Breast epithelium (tissue), 4 donors: ENCODE measurements at regions of chr4 and their contacts with region 1.

Region 1: DNA sequence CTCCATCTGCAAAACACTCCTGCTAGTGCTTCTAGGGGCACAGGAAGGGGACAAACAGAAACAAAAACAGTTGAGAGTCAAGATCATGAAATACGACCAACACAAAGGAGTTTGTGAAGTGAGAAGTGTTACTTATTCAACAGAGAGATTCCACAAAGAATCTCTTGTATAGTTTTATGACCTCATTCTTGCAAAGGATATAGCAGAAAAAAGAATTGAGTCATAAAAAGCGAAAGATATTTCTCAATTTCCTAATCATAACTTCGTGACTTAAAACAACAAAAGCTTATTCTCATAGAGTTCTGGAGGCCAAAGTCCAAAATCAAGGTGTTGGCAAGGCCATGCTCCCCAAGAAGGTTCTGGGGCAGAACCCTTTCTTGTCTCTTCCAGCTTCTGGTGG is 40.7 kb downstream of the TIGD4 start:
- DNase-seq: no peak
- H3K4me3 ChIP-seq: no peak overlapping the region
- H3K27ac ChIP-seq: no peak overlapping the region
- H3K4me1 ChIP-seq: no peaks in the 10 kb centered on the region
- H3K27me3 ChIP-seq: no peaks in the 10 kb centered on the region
- CTCF ChIP-seq: no peak
- POLR2A ChIP-seq: no peak

Region 2: DNA sequence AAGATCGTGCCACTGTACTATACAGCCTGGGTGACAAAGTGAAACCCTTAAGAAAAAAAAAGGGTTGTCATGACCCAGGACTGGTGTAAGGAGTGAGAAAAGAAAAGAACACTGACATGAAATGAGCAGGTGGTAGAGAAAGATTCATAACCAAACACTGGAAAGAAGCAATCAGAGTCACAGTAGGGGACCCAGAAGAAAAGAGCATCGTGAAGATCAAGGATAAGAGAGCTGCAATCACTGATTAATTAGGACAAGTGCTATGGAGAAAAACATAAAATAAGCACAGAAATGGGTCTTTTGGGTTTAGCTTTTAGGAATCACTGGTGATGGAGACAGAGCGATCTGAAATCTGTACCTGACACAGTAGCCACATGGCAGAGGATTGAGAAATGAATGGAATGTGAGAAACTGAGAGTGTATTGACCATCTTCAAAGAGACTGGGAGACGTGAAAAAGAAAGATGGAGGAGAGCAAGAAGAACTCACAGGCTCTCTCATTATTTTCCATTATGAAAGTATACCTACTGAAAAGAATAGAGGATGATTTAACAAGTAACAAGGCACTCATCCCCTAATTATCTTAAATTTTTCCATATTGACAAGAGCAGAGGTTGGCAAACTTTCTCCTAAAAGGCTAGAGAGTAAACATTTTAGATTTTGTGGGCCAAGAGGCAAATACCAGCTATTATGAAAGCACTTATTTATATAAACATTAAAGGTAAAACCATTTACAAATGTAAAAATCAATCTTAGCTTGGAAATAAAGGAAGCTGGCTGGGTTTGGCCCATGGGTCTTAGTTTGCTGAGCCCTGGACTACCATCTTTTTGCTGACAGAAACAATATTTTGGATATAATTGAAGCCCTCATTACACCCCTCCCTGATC is 66.4 kb before region 1 on chr4:
- intact Hi-C with region 1: loop called (anchors 2 kb)
- DNase-seq: no peak
- H3K4me3 ChIP-seq: no peak overlapping the region
- H3K27ac ChIP-seq: no peak overlapping the region
- H3K4me1 ChIP-seq: no peaks in the 10 kb centered on the region
- H3K27me3 ChIP-seq: no peaks in the 10 kb centered on the region
- CTCF ChIP-seq: no peak
- POLR2A ChIP-seq: no peak

Region 3: DNA sequence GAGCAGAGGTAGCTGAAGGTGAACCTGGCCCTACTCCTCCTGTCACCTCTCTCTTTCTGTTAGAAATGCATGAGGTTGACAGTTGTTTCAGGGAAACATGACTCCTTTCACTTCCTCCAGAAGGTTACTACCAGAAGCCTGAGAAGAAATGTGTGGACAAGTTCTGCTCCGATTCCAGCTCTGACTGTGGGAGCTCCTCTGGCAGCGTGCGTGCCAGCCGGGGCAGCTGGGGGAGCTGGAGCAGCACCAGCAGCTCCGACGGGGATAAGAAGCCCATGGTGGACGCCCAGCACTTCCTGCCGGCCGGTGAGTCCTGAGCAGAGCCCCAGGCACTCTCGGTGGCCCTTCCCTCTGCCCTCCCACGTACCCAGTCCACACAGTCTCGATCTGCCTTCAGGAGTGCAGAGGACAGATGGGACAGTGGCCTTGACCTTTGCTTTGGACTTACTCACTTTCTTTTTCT is 884.0 kb after region 1 on chr4:
- intact Hi-C with region 1: no loop called
- DNase-seq: no peak
- H3K4me3 ChIP-seq: no peak overlapping the region
- H3K27ac ChIP-seq: no peak overlapping the region
- H3K4me1 ChIP-seq: no peaks in the 10 kb centered on the region
- H3K27me3 ChIP-seq: no peaks in the 10 kb centered on the region
- CTCF ChIP-seq: no peak
- POLR2A ChIP-seq: no peak